Activated B cell treated with CpG ODN at 0.5 μM for 24 hours (primary cell): ENCODE measurements at regions of chr3 and their contacts with region 1.

Region 1: GRCh38 chr3:102057781-102058421 is 208.6 kb downstream of the NFKBIZ start:
- DNase-seq: no peak
- ATAC-seq: peak; percentile 75
- H3K4me3 Mint-ChIP-seq: peak overlapping the region; percentile 42
- H3K27ac Mint-ChIP-seq: peak overlapping the region; percentile 97
- H3K4me1 Mint-ChIP-seq: peaks cover 61% of the 10 kb centered on the region
- H3K27me3 Mint-ChIP-seq: no peaks in the 10 kb centered on the region
- CTCF ChIP-seq: no peak

Region 2: DNA sequence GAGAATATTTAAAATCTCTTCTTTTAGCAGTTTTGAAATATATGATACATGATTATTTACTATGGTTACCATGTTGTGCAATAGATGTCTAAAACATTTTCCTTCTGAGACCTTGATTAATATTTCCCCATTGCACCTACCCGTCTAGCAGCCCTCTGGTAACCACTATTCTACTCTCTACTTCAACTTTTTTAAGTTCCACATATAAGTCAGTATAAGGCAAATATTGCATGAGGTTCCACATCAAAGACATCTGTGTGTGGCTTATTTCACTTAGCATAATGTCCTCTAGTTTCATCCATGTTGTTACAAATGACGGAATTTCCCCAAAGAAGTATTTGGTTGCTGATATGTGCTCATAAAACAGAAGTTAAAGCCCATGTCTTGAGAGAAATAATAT is 238.1 kb before region 1 on chr3:
- CTCF ChIA-PET with region 1: no interaction called
- POLR2A ChIA-PET with region 1: interaction called, 3 read pairs
- intact Hi-C with region 1: loop called (anchors 2 kb)
- DNase-seq: no peak
- ATAC-seq: peak; percentile 83
- H3K4me3 Mint-ChIP-seq: no peak overlapping the region
- H3K27ac Mint-ChIP-seq: peak overlapping the region; percentile 81
- H3K4me1 Mint-ChIP-seq: peaks cover 64% of the 10 kb centered on the region
- H3K27me3 Mint-ChIP-seq: no peaks in the 10 kb centered on the region
- CTCF ChIP-seq: no peak

Region 3: DNA sequence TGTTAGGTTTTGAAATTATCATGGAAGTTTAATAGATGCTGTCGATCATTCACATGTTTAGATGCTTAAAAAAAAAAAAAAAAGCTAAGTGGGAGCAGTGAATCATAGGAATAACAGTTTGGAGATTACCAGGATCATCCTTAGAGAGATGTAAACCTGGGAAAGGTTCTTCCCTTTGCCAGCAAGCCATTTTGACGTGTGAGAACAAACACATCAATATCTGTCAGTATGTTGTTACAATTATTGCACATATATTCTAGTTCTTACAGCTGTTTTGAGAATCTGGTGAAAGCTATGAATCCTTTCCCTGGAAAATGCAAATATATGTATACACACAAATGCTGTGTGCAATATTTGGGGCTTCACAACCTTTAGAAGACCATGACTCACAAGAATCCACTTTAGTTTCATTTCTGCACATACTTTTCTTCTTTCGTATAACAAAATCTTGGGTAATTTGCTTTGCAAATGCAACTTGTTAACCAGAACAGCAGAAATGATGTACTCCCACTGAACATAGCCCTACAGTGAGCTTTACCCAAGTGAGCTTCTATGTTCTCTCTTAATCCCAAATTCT is 196.6 kb before region 1 on chr3:
- CTCF ChIA-PET with region 1: no interaction called
- POLR2A ChIA-PET with region 1: interaction called, 12 read pairs
- intact Hi-C with region 1: no loop called
- DNase-seq: no peak
- ATAC-seq: peak; percentile 64
- H3K4me3 Mint-ChIP-seq: peak overlapping the region; percentile 51
- H3K27ac Mint-ChIP-seq: peak overlapping the region; percentile 75
- H3K4me1 Mint-ChIP-seq: peaks cover 76% of the 10 kb centered on the region
- H3K27me3 Mint-ChIP-seq: no peaks in the 10 kb centered on the region
- CTCF ChIP-seq: no peak

Region 4: GRCh38 chr3:102018551-102018950 is 39.4 kb before region 1 on chr3:
- CTCF ChIA-PET with region 1: interaction called, 4 read pairs
- POLR2A ChIA-PET with region 1: interaction called, 13 read pairs
- intact Hi-C with region 1: loop called (anchors 1 kb)
- DNase-seq: no peak
- ATAC-seq: peak; percentile 82
- H3K4me3 Mint-ChIP-seq: peak overlapping the region; percentile 15
- H3K27ac Mint-ChIP-seq: peak overlapping the region; percentile 76
- H3K4me1 Mint-ChIP-seq: peaks cover 44% of the 10 kb centered on the region
- H3K27me3 Mint-ChIP-seq: no peaks in the 10 kb centered on the region
- CTCF ChIP-seq: no peak

Region 5: GRCh38 chr3:102078854-102079253 is 21.0 kb after region 1 on chr3:
- CTCF ChIA-PET with region 1: no interaction called
- POLR2A ChIA-PET with region 1: interaction called, 4 read pairs
- intact Hi-C with region 1: loop called (anchors 2 kb)
- DNase-seq: no peak
- ATAC-seq: peak; percentile 49
- H3K4me3 Mint-ChIP-seq: no peak overlapping the region
- H3K27ac Mint-ChIP-seq: peak overlapping the region; percentile 87
- H3K4me1 Mint-ChIP-seq: peaks cover 37% of the 10 kb centered on the region
- H3K27me3 Mint-ChIP-seq: no peaks in the 10 kb centered on the region
- CTCF ChIP-seq: no peak

Region 6: GRCh38 chr3:102324436-102324835 is 266.5 kb after region 1 on chr3:
- CTCF ChIA-PET with region 1: no interaction called
- POLR2A ChIA-PET with region 1: no interaction called
- intact Hi-C with region 1: no loop called
- DNase-seq: no peak
- ATAC-seq: no peak
- H3K4me3 Mint-ChIP-seq: no peak overlapping the region
- H3K27ac Mint-ChIP-seq: no peak overlapping the region
- H3K4me1 Mint-ChIP-seq: no peaks in the 10 kb centered on the region
- H3K27me3 Mint-ChIP-seq: peaks cover 6% of the 10 kb centered on the region
- CTCF ChIP-seq: no peak